Activated naive CD4-positive, alpha-beta T cell treated with anti-CD3 and anti-CD28 coated beads for 36 hours (primary cell): ENCODE measurements at regions of chr14 and their contacts with region 1.

Region 1: GRCh38 chr14:34498684-34499412 is 36.8 kb upstream of the SPTSSA start:
- DNase-seq: peak; percentile 38
- H3K4me3 Mint-ChIP-seq: no peak overlapping the region
- H3K27ac Mint-ChIP-seq: no peak overlapping the region
- H3K4me1 Mint-ChIP-seq: no peaks in the 10 kb centered on the region
- H3K27me3 Mint-ChIP-seq: no peaks in the 10 kb centered on the region

Region 2: DNA sequence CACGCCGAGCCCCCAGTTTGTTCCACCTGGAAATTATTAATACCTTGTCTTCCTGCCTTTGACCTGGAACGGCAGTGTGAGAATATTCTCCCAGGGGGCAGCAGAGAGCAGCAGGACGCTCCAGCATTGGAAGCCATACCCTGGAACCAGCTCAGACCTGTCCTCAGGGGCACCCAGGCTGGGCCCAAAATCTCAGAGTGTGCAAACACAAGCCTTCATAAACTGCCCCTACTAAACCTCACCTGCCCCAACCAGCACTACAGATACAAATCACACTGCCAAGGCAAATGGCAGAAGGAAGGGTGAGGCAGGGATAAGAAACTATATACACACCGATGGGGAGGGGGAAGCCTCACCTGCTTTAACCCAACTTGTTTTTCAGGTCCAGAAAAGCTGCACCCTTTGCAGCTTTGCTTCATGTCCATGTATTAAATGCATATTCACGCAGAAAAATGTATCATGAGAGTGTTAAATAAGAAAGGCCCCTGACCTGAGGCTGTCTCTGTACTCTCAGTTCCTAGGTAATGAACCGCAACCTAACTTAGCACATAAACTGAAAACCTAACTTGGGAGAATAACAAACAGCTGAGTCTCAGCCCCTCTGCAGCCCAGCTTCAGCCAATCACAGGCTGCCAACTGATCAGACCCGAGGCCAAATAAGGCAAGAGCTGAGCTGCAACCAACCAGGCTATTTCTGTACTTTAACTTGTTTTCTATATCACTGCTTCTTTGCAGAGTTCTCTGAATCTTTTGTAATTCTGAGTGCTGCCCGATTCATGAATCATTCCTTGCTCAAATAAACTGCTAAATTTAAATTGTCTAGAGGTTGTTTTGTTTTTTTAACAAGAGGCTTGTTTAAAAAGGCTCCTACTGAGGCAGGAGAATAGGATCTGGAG is 166.9 kb before region 1 on chr14:
- CTCF ChIA-PET with region 1: interaction called, 8 read pairs
- intact Hi-C with region 1: loop called (anchors 1 kb)
- DNase-seq: peak; percentile 82
- H3K4me3 Mint-ChIP-seq: no peak overlapping the region
- H3K27ac Mint-ChIP-seq: no peak overlapping the region
- H3K4me1 Mint-ChIP-seq: peaks cover 5% of the 10 kb centered on the region
- H3K27me3 Mint-ChIP-seq: no peaks in the 10 kb centered on the region

Region 3: GRCh38 chr14:34554540-34555333 is 55.9 kb after region 1 on chr14:
- CTCF ChIA-PET with region 1: no interaction called
- intact Hi-C with region 1: no loop called
- DNase-seq: no peak
- H3K4me3 Mint-ChIP-seq: peak overlapping the region; percentile 42
- H3K27ac Mint-ChIP-seq: peak overlapping the region; percentile 35
- H3K4me1 Mint-ChIP-seq: peaks cover 15% of the 10 kb centered on the region
- H3K27me3 Mint-ChIP-seq: no peaks in the 10 kb centered on the region